ENCODE measurements at regions of chr19 and their contacts with region 1.

Region 1: GRCh38 chr19:18557474-18558201 is at the start of gene KXD1:
- DNase-seq: peak; percentile 92 to 100 (median 97)
- ATAC-seq: peak; percentile 99
- H3K4me3 ChIP-seq: peak within 1 kb of the TSS; percentile 98 to 99
- H3K4me3 Mint-ChIP-seq: peak within 1 kb of the TSS; percentile 91
- H3K27ac ChIP-seq: peak within 1 kb of the TSS; percentile 96 to 99
- H3K27ac Mint-ChIP-seq: peak within 1 kb of the TSS; percentile 90
- H3K4me1 ChIP-seq: peaks cover 20% of the 10 kb centered on the region
- H3K4me1 Mint-ChIP-seq: peaks cover 20% of the 10 kb centered on the region
- H3K27me3 ChIP-seq: no peaks in the 10 kb centered on the region
- H3K27me3 Mint-ChIP-seq: no peaks in the 10 kb centered on the region
- CTCF ChIP-seq: no peak
- total RNA-seq, gene KXD1: 64.1 to 76.1 TPM

Region 2: GRCh38 chr19:18542936-18543815 is 14.5 kb before region 1 on chr19 and contains the start of gene FKBP8:
- CTCF ChIA-PET with region 1: interaction called, 15 read pairs
- POLR2A ChIA-PET with region 1: interaction called, 22 read pairs
- intact Hi-C with region 1: loop called (anchors 1 kb)
- DNase-seq: peak; percentile 86 to 96 (median 94)
- ATAC-seq: peak; percentile 97
- H3K4me3 ChIP-seq: peak within 1 kb of the TSS; percentile 58 to 62
- H3K4me3 Mint-ChIP-seq: peak within 1 kb of the TSS; percentile 89
- H3K27ac ChIP-seq: peak within 1 kb of the TSS; percentile 64 to 86
- H3K27ac Mint-ChIP-seq: peak within 1 kb of the TSS; percentile 96
- H3K4me1 ChIP-seq: peaks cover 20% of the 10 kb centered on the region
- H3K4me1 Mint-ChIP-seq: peaks cover 26% of the 10 kb centered on the region
- H3K27me3 ChIP-seq: no peaks in the 10 kb centered on the region
- H3K27me3 Mint-ChIP-seq: no peaks in the 10 kb centered on the region
- CTCF ChIP-seq: no peak
- total RNA-seq, gene FKBP8: 155 to 158 TPM

Measured in CD8-positive, alpha-beta T cell (primary cell).